Sigmoid colon (tissue), 7 donors: ENCODE measurements at regions of chr9 and their contacts with region 1.

Region 1: GRCh38 chr9:86580688-86581087 is 226.5 kb upstream of the TUT7 start:
- DNase-seq: peak; percentile 73
- H3K4me3 ChIP-seq: no peak overlapping the region
- H3K27ac ChIP-seq: peak overlapping the region in 3 of 4 donors; percentile 66 to 76 (median 68)
- H3K4me1 ChIP-seq: peaks cover 0 to 25% (median 17%) of the 10 kb centered on the region in 4 donors
- H3K27me3 ChIP-seq: no peaks in the 10 kb centered on the region
- CTCF ChIP-seq: no peak
- EP300 ChIP-seq: no peak
- POLR2A ChIP-seq: no peak

Region 2: DNA sequence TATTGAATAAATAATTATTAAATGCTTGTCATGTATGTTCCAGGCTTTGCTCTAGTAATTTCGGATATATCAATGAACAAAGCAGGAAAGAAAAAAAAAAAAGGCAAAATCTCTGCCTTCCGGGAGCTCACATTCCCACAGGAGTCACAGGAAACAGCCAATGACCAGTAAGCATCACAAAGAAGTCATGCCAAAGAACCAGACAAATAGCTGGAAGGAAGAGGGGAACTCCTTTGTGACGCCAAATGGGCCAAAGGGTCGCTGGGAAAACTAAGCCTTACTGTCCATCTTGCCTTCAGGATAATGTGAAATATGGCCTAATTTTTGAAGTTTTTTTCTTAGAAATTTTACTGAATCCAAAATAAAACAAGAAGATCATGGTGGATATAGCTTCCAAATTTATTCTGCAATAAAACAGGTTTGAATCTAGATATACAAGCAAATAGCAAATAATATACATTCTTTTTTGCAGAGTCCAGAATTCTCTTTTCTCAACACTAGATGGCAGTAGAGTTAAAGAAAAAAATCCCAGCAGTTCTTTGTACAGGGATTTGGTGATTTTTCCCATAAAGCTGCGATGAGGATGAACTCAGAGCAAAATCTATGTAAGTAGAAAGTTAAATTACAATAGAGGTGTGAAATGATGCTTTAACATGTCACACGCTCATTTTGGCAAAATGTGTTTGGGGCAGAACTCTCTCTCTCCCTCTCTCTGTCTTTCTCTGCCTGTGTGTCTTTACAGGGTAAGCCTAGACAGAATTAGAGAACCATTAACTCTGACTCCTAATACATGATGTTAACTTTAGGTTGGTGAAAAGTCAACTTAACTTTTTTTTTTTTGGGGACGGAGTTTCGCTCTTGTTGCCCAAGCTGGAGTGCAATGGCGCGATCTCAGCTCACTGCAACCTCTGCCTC is 166.5 kb before region 1 on chr9:
- intact Hi-C with region 1: no loop called
- DNase-seq: no peak
- H3K4me3 ChIP-seq: no peak overlapping the region
- H3K27ac ChIP-seq: no peak overlapping the region
- H3K4me1 ChIP-seq: peaks cover 0 to 6% (median 0%) of the 10 kb centered on the region in 4 donors
- H3K27me3 ChIP-seq: no peaks in the 10 kb centered on the region
- CTCF ChIP-seq: peak; percentile 41 to 77 (median 45)
- EP300 ChIP-seq: no peak
- POLR2A ChIP-seq: no peak

Region 3: DNA sequence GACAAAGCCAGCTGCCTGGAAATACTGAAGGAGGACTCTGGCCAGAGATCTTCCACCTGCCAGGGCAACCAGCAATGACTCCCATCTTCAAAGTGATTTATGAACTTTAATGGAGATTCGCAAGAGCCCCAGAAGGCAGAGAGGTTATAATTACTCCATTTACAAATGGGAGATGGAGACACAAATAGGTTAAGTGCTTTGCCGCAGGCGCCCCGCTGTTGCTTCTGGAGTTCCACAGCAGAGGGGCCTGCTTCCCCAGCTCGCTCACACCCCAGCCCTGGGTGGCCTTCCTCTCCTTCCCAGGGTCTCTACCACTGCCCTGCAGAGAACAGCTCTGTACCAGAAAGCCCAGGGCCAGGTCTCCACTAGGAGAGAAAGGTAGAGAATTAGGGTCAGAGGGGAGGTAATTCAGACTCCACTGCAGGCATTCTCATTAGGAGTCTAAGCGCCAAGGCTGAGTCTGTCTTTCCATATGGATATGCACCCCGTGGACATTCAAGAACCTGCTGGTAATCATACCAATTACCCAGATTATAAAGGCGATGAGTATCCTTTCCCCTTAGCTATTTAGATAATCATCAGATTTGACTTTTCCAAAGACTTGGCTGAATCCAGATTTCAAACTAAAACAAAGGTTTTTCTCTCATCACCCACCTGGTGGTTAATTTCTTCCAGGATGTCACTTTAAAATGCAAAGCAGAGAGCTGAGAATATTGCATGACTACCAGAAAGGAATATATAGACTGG is 68.9 kb before region 1 on chr9:
- intact Hi-C with region 1: loop called (anchors 5 kb)
- DNase-seq: no peak
- H3K4me3 ChIP-seq: no peak overlapping the region
- H3K27ac ChIP-seq: peak overlapping the region in 2 of 4 donors; percentile 7 to 21
- H3K4me1 ChIP-seq: peaks cover 0 to 75% (median 49%) of the 10 kb centered on the region in 4 donors
- H3K27me3 ChIP-seq: no peaks in the 10 kb centered on the region
- CTCF ChIP-seq: no peak
- EP300 ChIP-seq: no peak
- POLR2A ChIP-seq: no peak